Endothelial cell of umbilical vein (primary cell): ENCODE measurements at regions of chr4 and their contacts with region 1.

Region 1: DNA sequence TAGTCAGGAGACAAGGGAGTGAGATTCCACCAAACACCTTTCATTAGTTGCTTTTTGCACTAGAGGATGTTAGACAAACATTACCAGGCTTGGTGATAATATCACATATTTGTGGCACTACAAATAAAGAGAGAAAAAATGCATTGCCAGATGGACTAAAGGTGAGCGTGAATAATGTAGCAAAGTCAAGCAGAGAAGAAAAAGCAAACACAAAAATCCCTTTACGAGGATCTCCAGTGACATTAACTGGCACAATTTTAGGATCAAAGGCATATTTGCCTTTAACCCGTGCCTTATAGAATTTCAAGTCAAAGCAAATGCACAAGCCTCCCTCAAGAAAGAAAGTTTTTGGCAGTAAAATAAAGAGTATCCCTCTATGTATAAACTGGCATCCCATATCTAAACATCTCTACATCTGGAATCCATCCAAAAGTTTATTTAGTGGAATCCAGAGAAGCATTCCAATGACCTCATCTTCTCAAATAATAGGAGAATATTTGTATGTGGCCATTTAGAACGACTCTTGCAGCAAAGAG is 290.8 kb downstream of the KCTD8 start:
- DNase-seq: peak; percentile 71
- H3K4me3 ChIP-seq: no peak overlapping the region
- H3K27ac ChIP-seq: peak overlapping the region; percentile 75
- H3K4me1 ChIP-seq: peaks cover 55% of the 10 kb centered on the region
- H3K27me3 ChIP-seq: no peaks in the 10 kb centered on the region
- CTCF ChIP-seq: no peak
- POLR2A ChIP-seq: no peak

Region 2: DNA sequence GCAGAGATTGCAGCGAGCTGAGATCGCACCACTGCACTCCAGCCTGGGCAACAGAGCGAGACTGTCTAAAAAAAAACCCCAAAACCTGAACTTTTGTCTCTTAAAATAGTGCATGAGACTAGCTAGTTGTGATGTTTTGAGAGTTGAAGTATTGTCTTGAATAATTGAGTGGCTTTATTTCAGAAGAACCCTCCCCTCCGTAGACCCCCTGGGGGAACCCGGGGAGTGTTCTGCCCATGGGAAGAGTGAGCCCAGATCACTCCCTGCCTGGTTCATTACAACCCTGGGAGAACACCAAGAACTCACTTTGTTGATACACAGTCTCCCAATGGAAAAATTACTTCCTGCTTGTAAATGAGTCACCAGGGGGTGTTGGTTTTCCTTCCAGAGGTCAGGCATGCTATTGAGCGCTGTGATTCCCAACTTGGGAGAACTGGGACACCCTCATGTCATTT is 1825.8 kb before region 1 on chr4:
- CTCF ChIA-PET with region 1: no interaction called
- POLR2A ChIA-PET with region 1: no interaction called
- dilution Hi-C with region 1: no loop called
- intact Hi-C with region 1: loop called (anchors 10 kb)
- DNase-seq: peak; percentile 88
- H3K4me3 ChIP-seq: no peak overlapping the region
- H3K27ac ChIP-seq: peak overlapping the region; percentile 73
- H3K4me1 ChIP-seq: peaks cover 15% of the 10 kb centered on the region
- H3K27me3 ChIP-seq: no peaks in the 10 kb centered on the region
- CTCF ChIP-seq: no peak
- POLR2A ChIP-seq: no peak

Region 3: GRCh38 chr4:43456383-43456782 is 701.4 kb before region 1 on chr4:
- CTCF ChIA-PET with region 1: no interaction called
- POLR2A ChIA-PET with region 1: no interaction called
- dilution Hi-C with region 1: no loop called
- intact Hi-C with region 1: loop called (anchors 10 kb)
- DNase-seq: peak; percentile 61
- H3K4me3 ChIP-seq: peak overlapping the region in 1 of 3 experiments; percentile 3
- H3K27ac ChIP-seq: peak overlapping the region; percentile 65
- H3K4me1 ChIP-seq: peaks cover 11% of the 10 kb centered on the region
- H3K27me3 ChIP-seq: no peaks in the 10 kb centered on the region
- CTCF ChIP-seq: no peak
- POLR2A ChIP-seq: no peak

Region 4: DNA sequence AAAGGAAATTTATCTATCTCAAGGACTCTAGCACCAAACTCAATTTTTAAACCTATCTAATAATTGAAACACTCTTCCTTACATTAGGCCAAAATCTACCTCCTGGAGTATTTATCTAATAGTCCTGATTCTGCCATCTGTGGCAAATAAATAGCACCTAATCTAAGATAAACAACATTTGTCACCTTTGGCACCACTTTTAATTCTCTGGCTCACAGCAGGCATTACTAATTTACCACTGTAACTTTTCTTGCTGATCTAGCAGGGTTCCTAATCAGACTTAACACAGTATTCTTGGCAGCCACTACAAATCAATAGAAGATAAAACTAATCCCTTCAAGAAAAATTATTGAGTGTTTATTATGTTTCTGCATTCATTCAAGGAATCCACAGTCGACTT is 129.7 kb after region 1 on chr4:
- CTCF ChIA-PET with region 1: no interaction called
- POLR2A ChIA-PET with region 1: no interaction called
- dilution Hi-C with region 1: no loop called
- intact Hi-C with region 1: no loop called
- DNase-seq: no peak
- H3K4me3 ChIP-seq: no peak overlapping the region
- H3K27ac ChIP-seq: no peak overlapping the region
- H3K4me1 ChIP-seq: no peaks in the 10 kb centered on the region
- H3K27me3 ChIP-seq: no peaks in the 10 kb centered on the region
- CTCF ChIP-seq: no peak
- POLR2A ChIP-seq: no peak